GM23248 (cell line): ENCODE measurements at regions of chr15 and their contacts with region 1.

Region 1: GRCh38 chr15:73081321-73081958 is 29.2 kb downstream of the NEO1 start:
- DNase-seq: peak; percentile 77
- H3K4me3 ChIP-seq: no peak overlapping the region
- H3K27ac ChIP-seq: no peak overlapping the region
- H3K4me1 ChIP-seq: peaks cover 11% of the 10 kb centered on the region
- H3K27me3 ChIP-seq: no peaks in the 10 kb centered on the region

Region 2: DNA sequence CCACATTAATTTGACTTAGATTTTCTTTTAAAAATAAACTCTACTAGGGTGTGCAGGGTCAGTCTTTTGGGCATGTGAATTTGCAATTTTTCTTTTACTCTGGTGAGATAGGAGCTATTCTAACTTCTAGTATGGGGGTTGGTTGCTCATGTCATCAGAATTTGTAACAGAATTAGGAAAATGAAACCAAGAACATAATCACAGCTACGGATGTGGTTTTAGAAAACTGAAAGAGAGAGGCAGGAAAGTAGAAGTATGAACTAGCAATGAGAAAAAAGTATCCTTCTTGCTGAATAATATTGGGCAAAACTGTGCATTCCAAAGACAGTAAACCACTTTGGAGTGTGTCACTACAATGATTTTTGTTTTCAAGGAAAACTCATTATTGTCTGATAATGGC is 341.2 kb before region 1 on chr15:
- in situ Hi-C with region 1: no loop called
- DNase-seq: no peak
- H3K4me3 ChIP-seq: no peak overlapping the region
- H3K27ac ChIP-seq: no peak overlapping the region
- H3K4me1 ChIP-seq: no peaks in the 10 kb centered on the region
- H3K27me3 ChIP-seq: no peaks in the 10 kb centered on the region

Region 3: GRCh38 chr15:72796515-72797337 is 284.7 kb before region 1 on chr15:
- in situ Hi-C with region 1: loop called (anchors 10 kb)
- DNase-seq: peak; percentile 75
- H3K4me3 ChIP-seq: peak overlapping the region; percentile 73
- H3K27ac ChIP-seq: no peak overlapping the region
- H3K4me1 ChIP-seq: no peaks in the 10 kb centered on the region
- H3K27me3 ChIP-seq: no peaks in the 10 kb centered on the region